ENCODE measurements at regions of chr7 and their contacts with region 1.

Region 1: GRCh38 chr7:77326696-77327628 is 89.2 kb downstream of the GSAP start:
- DNase-seq: peak in 6 of 7 donors; percentile 39 to 76 (median 54)
- H3K4me3 ChIP-seq: no peak overlapping the region
- H3K27ac ChIP-seq: peak overlapping the region in 2 of 5 donors; percentile 15 to 29
- H3K4me1 ChIP-seq: peaks cover 16 to 29% of the 10 kb centered on the region in 2 donors
- H3K27me3 ChIP-seq: no peaks in the 10 kb centered on the region
- CTCF ChIP-seq: no peak
- POLR2A ChIP-seq: no peak

Region 2: GRCh38 chr7:77247206-77247850 is 79.6 kb before region 1 on chr7:
- intact Hi-C with region 1: loop called in 1 of 2 experiments (anchors 10 kb)
- DNase-seq: peak; percentile 60 to 90 (median 79)
- H3K4me3 ChIP-seq: no peak overlapping the region
- H3K27ac ChIP-seq: no peak overlapping the region
- H3K4me1 ChIP-seq: peaks cover 10 to 16% of the 10 kb centered on the region in 2 donors
- H3K27me3 ChIP-seq: no peaks in the 10 kb centered on the region
- CTCF ChIP-seq: peak; percentile 64 to 91 (median 84)
- POLR2A ChIP-seq: no peak

Region 3: GRCh38 chr7:77587272-77587671 is 260.3 kb after region 1 on chr7:
- intact Hi-C with region 1: no loop called
- DNase-seq: no peak
- H3K4me3 ChIP-seq: no peak overlapping the region
- H3K27ac ChIP-seq: no peak overlapping the region
- H3K4me1 ChIP-seq: peaks cover 12 to 44% of the 10 kb centered on the region in 2 donors
- H3K27me3 ChIP-seq: no peaks in the 10 kb centered on the region
- CTCF ChIP-seq: no peak
- POLR2A ChIP-seq: no peak

Measured in adrenal gland (tissue), 19 donors.